OCI-LY7 (cell line): ENCODE measurements at regions of chr20 and their contacts with region 1.

Region 1: GRCh38 chr20:63223221-63224207 is 7.6 kb upstream of the YTHDF1 start:
- DNase-seq: peak; percentile 58
- H3K4me3 ChIP-seq: no peak overlapping the region
- H3K27ac ChIP-seq: no peak overlapping the region
- H3K4me1 ChIP-seq: no peaks in the 10 kb centered on the region
- CTCF ChIP-seq: peak; percentile 88

Region 2: DNA sequence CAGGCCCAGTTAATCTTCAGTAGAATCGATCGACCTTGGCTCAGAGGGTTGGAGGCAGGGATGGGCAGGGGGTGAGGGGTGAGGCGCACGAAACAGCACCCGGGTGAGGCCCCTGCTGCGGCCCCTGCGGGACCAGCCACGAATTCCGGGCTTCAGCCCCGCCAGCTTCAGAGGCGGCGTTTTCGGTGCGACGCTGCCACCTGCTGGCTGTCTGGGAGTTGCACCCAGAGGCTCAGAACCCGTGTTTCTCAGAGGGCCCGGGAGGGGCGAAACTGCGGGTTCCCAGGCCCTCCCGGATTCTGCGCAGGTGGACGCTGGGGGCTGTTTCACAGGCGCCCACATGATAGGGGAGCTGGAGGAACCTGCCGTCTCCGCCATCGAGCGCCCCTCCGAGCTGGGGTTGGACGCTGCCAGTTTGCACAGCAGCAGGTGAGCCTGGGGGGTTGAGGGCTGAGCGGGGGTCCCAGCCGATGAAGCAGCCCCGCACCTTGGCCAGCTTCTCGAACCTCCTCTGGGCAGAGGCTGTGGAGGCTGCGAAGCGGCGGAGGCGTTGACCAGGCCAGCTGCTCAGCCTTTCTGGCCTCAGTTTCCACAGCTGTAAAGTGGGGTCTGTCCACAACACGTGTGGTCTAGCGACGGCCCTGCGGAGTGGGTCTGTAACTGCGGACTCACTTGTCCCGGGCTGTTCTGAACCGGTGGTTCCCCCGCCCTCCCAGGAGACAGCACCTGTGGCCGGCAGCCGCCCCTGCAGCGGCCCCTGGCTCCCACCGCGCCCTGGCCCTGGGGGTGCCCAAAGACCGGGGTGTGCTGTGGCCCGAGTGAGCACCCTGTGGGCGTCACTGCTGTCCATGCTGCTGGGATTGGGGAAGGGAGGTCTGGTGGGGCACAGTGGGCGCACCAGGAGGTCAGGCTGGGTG is 214.2 kb before region 1 on chr20:
- CTCF ChIA-PET with region 1: no interaction called
- POLR2A ChIA-PET with region 1: no interaction called
- intact Hi-C with region 1: no loop called
- DNase-seq: peak; percentile 75
- H3K4me3 ChIP-seq: no peak overlapping the region
- H3K27ac ChIP-seq: no peak overlapping the region
- H3K4me1 ChIP-seq: peaks cover 4% of the 10 kb centered on the region
- CTCF ChIP-seq: peak; percentile 94

Region 3: GRCh38 chr20:63178889-63179686 is 44.4 kb before region 1 on chr20:
- CTCF ChIA-PET with region 1: no interaction called
- POLR2A ChIA-PET with region 1: no interaction called
- intact Hi-C with region 1: no loop called
- DNase-seq: peak; percentile 30
- H3K4me3 ChIP-seq: no peak overlapping the region
- H3K27ac ChIP-seq: no peak overlapping the region
- H3K4me1 ChIP-seq: no peaks in the 10 kb centered on the region
- CTCF ChIP-seq: peak; percentile 74

Region 4: GRCh38 chr20:63249891-63250290 is 26.4 kb after region 1 on chr20:
- CTCF ChIA-PET with region 1: interaction called, 3 read pairs
- POLR2A ChIA-PET with region 1: no interaction called
- intact Hi-C with region 1: loop called (anchors 2 kb)
- DNase-seq: no peak
- H3K4me3 ChIP-seq: no peak overlapping the region
- H3K27ac ChIP-seq: no peak overlapping the region
- H3K4me1 ChIP-seq: no peaks in the 10 kb centered on the region
- CTCF ChIP-seq: no peak

Region 5: DNA sequence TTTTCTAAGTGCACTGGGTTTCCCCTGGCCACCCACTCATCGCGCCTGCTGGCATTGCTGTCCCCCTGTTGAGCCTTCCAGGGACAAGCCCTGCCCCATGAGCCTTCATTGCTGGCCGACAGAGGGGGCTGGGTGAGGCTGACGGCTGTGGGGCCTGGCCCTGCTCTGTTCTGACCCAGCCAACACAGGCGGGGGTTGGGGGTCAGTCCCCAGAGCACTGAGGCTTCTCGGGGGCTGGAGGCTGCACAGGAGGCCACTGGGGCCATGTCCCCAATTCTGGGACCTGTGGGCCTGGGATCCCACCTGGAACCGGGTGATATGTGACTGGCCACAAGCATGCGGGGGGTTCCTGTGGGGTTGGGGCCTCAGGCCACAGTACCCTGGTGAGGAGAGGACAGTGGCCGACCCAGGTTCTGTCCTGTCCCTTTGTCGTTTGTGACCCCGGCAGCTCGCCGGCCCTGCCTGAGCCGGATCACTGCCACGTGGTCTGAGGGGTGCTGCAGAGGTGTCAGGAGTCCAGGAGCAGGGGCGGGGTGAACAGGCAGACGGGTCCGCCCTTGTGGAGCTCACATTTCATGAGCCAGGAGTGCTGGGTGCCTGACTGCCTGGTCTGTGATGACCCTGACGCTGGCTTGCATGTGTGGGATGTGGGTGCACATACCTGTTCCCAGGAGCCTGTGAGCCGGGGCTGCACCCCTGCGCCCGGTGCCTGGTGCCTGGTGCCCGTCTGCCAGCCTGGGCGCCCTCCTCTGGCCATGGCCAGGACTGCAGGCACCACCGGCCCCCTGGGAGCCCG is 67.4 kb after region 1 on chr20:
- CTCF ChIA-PET with region 1: interaction called, 3 read pairs
- POLR2A ChIA-PET with region 1: no interaction called
- intact Hi-C with region 1: loop called (anchors 1 kb)
- DNase-seq: peak; percentile 51
- H3K4me3 ChIP-seq: no peak overlapping the region
- H3K27ac ChIP-seq: no peak overlapping the region
- H3K4me1 ChIP-seq: no peaks in the 10 kb centered on the region
- CTCF ChIP-seq: peak; percentile 73